B cell (primary cell): ENCODE measurements at regions of chr13 and their contacts with region 1.

Region 1: GRCh38 chr13:45340926-45341750 is at the start of gene TPT1:
- DNase-seq: peak; percentile 100
- ATAC-seq: peak; percentile 89
- H3K4me3 ChIP-seq: peak within 1 kb of the TSS; percentile 78 to 99 (median 95)
- H3K4me3 Mint-ChIP-seq: peak within 1 kb of the TSS; percentile 99
- H3K27ac ChIP-seq: peak within 1 kb of the TSS; percentile 93 to 97
- H3K27ac Mint-ChIP-seq: peak within 1 kb of the TSS; percentile 100
- H3K4me1 ChIP-seq: peaks cover 31 to 35% of the 10 kb centered on the region in 2 donors
- H3K4me1 Mint-ChIP-seq: peaks cover 51% of the 10 kb centered on the region
- H3K27me3 ChIP-seq: no peaks in the 10 kb centered on the region
- H3K27me3 Mint-ChIP-seq: no peaks in the 10 kb centered on the region
- CTCF ChIP-seq: no peak
- total RNA-seq, gene TPT1: 4,599 and 4,871 TPM in 2 replicates

Region 2: DNA sequence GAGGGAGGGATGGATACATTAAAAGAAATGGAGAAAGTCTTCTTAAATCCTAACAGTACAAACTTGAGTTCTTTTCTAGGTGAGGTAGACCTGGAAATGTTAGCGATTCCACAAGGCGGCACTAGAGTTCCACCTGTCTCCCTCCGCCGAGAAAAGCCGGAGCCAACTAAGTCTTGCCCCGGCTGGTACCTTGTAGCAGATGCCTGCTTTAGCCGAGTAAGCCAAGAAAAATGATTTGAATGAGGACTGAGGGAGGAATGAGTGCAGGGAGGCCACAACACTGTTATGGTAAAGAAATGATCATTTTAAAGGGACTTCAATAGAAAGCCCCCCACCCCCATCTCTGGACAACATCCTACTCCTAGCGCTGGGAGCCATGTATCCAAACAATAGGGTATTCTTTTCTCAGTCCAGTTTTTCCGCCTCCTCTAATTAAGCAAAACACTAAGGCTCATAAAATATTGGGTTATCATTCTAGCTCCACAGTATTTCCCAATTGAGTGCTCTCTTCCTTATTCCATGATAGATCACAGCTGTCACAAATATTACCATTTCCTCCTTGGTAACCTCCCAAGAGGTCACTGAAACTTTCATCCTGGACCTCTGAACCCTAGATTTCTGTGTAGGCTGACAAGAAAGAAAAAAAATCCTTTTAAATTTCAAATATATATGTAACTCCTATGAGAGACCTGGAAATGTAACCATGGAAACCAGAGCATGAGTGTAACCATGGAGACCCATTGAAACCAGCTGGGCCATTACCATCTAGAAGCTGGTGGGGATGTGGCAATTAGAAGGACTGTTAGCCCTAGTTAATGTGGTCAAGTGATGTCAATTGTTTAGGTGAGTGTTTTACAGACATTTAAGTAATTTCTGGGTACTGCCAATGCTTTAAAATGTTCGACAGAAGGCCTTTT is 293.5 kb before region 1 on chr13:
- CTCF ChIA-PET with region 1: interaction called, 3 read pairs
- POLR2A ChIA-PET with region 1: no interaction called
- intact Hi-C with region 1: loop called (anchors 1 kb)
- DNase-seq: peak; percentile 82
- ATAC-seq: peak; percentile 87
- H3K4me3 ChIP-seq: peak overlapping the region in 3 of 5 experiments; percentile 30 to 55 (median 32)
- H3K4me3 Mint-ChIP-seq: peak overlapping the region; percentile 79
- H3K27ac ChIP-seq: no peak overlapping the region
- H3K27ac Mint-ChIP-seq: no peak overlapping the region
- H3K4me1 ChIP-seq: peaks cover 23 to 25% of the 10 kb centered on the region in 2 donors
- H3K4me1 Mint-ChIP-seq: peaks cover 23% of the 10 kb centered on the region
- H3K27me3 ChIP-seq: peaks cover 0 to 4% (median 2%) of the 10 kb centered on the region in 4 experiments
- H3K27me3 Mint-ChIP-seq: peaks cover 29% of the 10 kb centered on the region
- CTCF ChIP-seq: peak; percentile 83

Region 3: DNA sequence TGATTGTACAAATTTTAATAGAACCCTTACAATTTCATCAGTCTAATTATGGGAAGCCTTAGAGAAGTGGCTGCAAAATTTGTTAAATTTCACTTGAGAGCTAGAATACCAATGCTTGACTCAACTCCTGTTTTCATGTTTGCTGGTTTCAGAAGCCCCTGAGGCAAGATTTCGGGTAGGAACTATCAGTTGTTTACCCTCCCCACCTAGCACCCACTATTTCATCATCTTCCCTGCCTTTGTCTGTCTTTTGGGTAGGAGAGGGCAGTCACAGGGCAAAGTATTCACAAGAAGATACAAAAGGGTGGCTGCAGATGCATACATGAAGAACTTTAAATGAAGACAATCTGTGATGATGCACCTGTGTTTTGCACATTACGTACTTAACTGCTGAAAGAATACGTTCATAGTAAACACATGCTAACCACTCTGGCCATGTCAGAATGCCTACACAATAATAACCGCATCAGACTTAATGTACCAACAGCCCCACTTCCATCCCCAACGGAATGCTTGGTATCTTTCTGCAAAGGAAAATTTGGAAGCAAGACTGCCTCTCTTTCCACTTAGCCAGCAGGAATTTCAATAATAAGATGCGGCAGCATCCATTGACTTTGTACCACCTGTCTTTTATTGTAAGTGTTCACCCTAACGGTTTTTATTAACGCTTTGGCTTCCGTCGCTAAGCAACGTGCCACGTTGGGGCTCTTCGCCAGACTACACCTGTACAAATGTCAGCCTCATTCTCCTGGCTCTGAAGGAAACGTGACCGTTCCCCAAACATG is 30.6 kb before region 1 on chr13:
- CTCF ChIA-PET with region 1: interaction called, 5 read pairs
- POLR2A ChIA-PET with region 1: no interaction called
- intact Hi-C with region 1: loop called (anchors 2 kb)
- DNase-seq: no peak
- ATAC-seq: no peak
- H3K4me3 ChIP-seq: peak overlapping the region in 3 of 5 experiments; percentile 53 to 69 (median 57)
- H3K4me3 Mint-ChIP-seq: peak overlapping the region; percentile 84
- H3K27ac ChIP-seq: no peak overlapping the region
- H3K27ac Mint-ChIP-seq: no peak overlapping the region
- H3K4me1 ChIP-seq: peaks cover 11 to 16% of the 10 kb centered on the region in 2 donors
- H3K4me1 Mint-ChIP-seq: peaks cover 17% of the 10 kb centered on the region
- H3K27me3 ChIP-seq: peaks cover 0 to 21% (median 13%) of the 10 kb centered on the region in 4 experiments
- H3K27me3 Mint-ChIP-seq: peaks cover 34% of the 10 kb centered on the region
- CTCF ChIP-seq: no peak

Region 4: GRCh38 chr13:45393941-45394570 is 52.9 kb after region 1 on chr13:
- CTCF ChIA-PET with region 1: interaction called, 15 read pairs
- POLR2A ChIA-PET with region 1: no interaction called
- intact Hi-C with region 1: loop called (anchors 1 kb)
- DNase-seq: peak; percentile 49
- ATAC-seq: peak; percentile 47
- H3K4me3 ChIP-seq: no peak overlapping the region
- H3K4me3 Mint-ChIP-seq: no peak overlapping the region
- H3K27ac ChIP-seq: no peak overlapping the region
- H3K27ac Mint-ChIP-seq: no peak overlapping the region
- H3K4me1 ChIP-seq: no peaks in the 10 kb centered on the region
- H3K4me1 Mint-ChIP-seq: peaks cover 6% of the 10 kb centered on the region
- H3K27me3 ChIP-seq: no peaks in the 10 kb centered on the region
- H3K27me3 Mint-ChIP-seq: no peaks in the 10 kb centered on the region
- CTCF ChIP-seq: peak; percentile 63

Region 5: DNA sequence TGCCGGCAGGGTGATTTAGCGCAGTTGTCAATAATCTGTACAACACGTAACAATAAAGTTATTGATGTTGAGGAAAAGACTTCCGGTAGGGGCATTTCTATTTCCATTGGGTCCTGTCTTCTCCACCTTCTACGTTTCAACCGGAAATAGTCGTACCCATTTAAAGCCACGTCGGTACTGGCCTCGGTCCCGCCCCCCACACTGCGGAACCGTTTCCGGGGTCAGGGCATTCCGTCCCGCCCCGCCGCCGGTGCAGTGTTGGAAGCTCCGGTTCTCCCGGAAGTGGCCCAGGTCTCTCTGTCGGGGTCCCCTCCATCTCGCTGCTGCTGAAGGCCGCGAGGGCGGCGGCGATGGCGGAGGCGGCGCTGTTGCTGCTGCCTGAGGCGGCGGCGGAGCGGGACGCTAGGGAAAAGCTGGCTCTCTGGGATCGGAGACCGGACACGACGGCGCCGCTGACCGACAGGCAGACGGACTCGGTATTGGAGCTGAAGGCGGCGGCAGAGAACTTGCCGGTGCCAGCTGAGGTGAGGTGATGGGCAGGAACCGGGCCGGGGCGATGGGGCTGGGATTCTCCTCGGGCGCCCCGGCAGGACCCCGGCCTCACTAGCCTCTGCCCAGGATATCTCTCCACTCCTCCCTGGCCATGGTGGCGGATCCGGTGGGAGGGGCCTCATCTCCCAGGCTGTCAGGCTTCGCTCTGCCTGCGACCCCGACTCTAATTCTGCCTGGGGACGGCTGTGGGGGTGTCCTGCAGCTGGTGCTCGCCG is 123.7 kb after region 1 on chr13 and contains the start of gene COG3:
- CTCF ChIA-PET with region 1: no interaction called
- POLR2A ChIA-PET with region 1: interaction called, 3 read pairs
- intact Hi-C with region 1: loop called (anchors 1 kb)
- DNase-seq: peak; percentile 96
- ATAC-seq: peak; percentile 96
- H3K4me3 ChIP-seq: peak within 1 kb of the TSS; percentile 74 to 96 (median 88)
- H3K4me3 Mint-ChIP-seq: peak within 1 kb of the TSS; percentile 91
- H3K27ac ChIP-seq: peak within 1 kb of the TSS; percentile 78 to 83
- H3K27ac Mint-ChIP-seq: peak within 1 kb of the TSS; percentile 91
- H3K4me1 ChIP-seq: peaks cover 12 to 21% of the 10 kb centered on the region in 2 donors
- H3K4me1 Mint-ChIP-seq: peaks cover 38% of the 10 kb centered on the region
- H3K27me3 ChIP-seq: no peaks in the 10 kb centered on the region
- H3K27me3 Mint-ChIP-seq: no peaks in the 10 kb centered on the region
- CTCF ChIP-seq: peak; percentile 56
- total RNA-seq, gene COG3: 37.3 and 41.5 TPM in 2 replicates